Caco-2 (cell line): ENCODE measurements at regions of chr6 and their contacts with region 1.

Region 1: GRCh38 chr6:102986086-102986485 is 1592.6 kb downstream of the GRIK2 start:
- DNase-seq: no peak
- H3K4me3 ChIP-seq: no peak overlapping the region
- H3K4me3 Mint-ChIP-seq: no peak overlapping the region
- H3K27ac Mint-ChIP-seq: peak overlapping the region; percentile 26
- H3K4me1 ChIP-seq: peaks cover 21% of the 10 kb centered on the region
- H3K4me1 Mint-ChIP-seq: peaks cover 19% of the 10 kb centered on the region
- H3K27me3 ChIP-seq: no peaks in the 10 kb centered on the region
- H3K27me3 Mint-ChIP-seq: no peaks in the 10 kb centered on the region
- CTCF ChIP-seq: no peak

Region 2: DNA sequence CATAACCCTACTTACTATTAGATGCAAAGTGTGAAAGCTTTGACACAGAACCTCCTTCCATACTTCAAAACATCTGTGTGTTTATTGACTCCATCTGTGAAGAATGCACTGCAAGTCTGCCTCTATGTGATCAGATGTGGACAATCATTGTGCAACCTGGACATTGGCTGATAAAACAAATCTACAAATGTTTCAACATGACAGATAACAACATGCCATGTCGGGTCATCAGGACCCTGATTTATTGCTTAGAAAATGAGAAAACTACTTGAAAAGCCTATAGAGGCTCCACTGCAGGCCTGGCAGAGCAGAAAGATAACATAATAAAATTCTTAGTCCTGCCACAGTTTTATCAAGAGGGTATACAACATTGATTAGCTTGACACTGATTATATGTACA is 306.2 kb before region 1 on chr6:
- CTCF ChIA-PET with region 1: no interaction called
- POLR2A ChIA-PET with region 1: no interaction called
- intact Hi-C with region 1: loop called (anchors 1 kb)
- DNase-seq: peak; percentile 51 to 53
- H3K4me3 ChIP-seq: no peak overlapping the region
- H3K4me3 Mint-ChIP-seq: peak overlapping the region; percentile 18
- H3K27ac Mint-ChIP-seq: no peak overlapping the region
- H3K4me1 ChIP-seq: peaks cover 19% of the 10 kb centered on the region
- H3K4me1 Mint-ChIP-seq: peaks cover 13% of the 10 kb centered on the region
- H3K27me3 ChIP-seq: no peaks in the 10 kb centered on the region
- H3K27me3 Mint-ChIP-seq: no peaks in the 10 kb centered on the region
- CTCF ChIP-seq: no peak

Region 3: DNA sequence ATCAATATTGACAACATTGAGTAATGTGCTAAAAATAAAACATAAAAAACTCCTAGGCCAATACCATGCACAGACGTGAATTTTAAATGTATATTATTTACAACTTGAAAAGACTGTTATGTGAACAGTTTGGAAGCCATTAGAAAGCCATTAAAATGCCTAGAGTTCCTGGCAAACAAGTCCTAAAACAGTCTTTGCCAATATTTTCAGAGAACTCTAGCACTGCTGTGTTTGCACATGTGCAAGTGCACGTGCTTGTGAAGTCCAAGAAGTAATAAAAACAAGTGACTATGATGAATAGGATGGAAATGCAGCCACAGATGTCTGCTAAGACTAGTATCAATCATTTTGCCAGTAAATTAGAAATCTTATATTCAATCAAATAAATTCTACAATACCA is 145.0 kb before region 1 on chr6:
- CTCF ChIA-PET with region 1: no interaction called
- POLR2A ChIA-PET with region 1: no interaction called
- intact Hi-C with region 1: no loop called
- DNase-seq: peak; percentile 4 to 34
- H3K4me3 ChIP-seq: no peak overlapping the region
- H3K4me3 Mint-ChIP-seq: no peak overlapping the region
- H3K27ac Mint-ChIP-seq: no peak overlapping the region
- H3K4me1 ChIP-seq: no peaks in the 10 kb centered on the region
- H3K4me1 Mint-ChIP-seq: no peaks in the 10 kb centered on the region
- H3K27me3 ChIP-seq: no peaks in the 10 kb centered on the region
- H3K27me3 Mint-ChIP-seq: no peaks in the 10 kb centered on the region
- CTCF ChIP-seq: no peak

Region 4: GRCh38 chr6:102853269-102853955 is 132.7 kb before region 1 on chr6:
- CTCF ChIA-PET with region 1: no interaction called
- POLR2A ChIA-PET with region 1: no interaction called
- intact Hi-C with region 1: loop called (anchors 1 kb)
- DNase-seq: peak; percentile 50 to 57
- H3K4me3 ChIP-seq: no peak overlapping the region
- H3K4me3 Mint-ChIP-seq: no peak overlapping the region
- H3K27ac Mint-ChIP-seq: no peak overlapping the region
- H3K4me1 ChIP-seq: peaks cover 7% of the 10 kb centered on the region
- H3K4me1 Mint-ChIP-seq: peaks cover 13% of the 10 kb centered on the region
- H3K27me3 ChIP-seq: no peaks in the 10 kb centered on the region
- H3K27me3 Mint-ChIP-seq: no peaks in the 10 kb centered on the region
- CTCF ChIP-seq: no peak

Region 5: DNA sequence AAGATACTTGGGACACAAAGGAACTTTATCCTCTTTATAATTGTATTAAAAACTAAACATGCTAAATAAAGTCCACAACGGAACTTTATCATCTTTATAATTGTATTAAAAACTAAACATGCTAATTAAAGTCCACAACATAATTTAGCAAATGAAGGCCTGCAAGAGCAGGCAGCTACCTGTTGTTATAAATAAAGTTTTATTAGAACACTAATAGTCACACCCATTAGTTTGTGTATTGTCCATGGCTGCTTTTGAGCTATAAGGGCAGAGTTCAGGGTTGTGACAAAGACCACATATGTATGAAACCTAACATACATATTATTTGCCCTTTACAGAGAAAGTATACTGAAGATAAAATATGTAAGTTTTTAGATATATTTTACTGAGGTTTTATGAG is 109.4 kb after region 1 on chr6:
- CTCF ChIA-PET with region 1: no interaction called
- POLR2A ChIA-PET with region 1: no interaction called
- intact Hi-C with region 1: loop called (anchors 1 kb)
- DNase-seq: no peak
- H3K4me3 ChIP-seq: no peak overlapping the region
- H3K4me3 Mint-ChIP-seq: no peak overlapping the region
- H3K27ac Mint-ChIP-seq: no peak overlapping the region
- H3K4me1 ChIP-seq: no peaks in the 10 kb centered on the region
- H3K4me1 Mint-ChIP-seq: no peaks in the 10 kb centered on the region
- H3K27me3 ChIP-seq: no peaks in the 10 kb centered on the region
- H3K27me3 Mint-ChIP-seq: no peaks in the 10 kb centered on the region
- CTCF ChIP-seq: no peak

Region 6: DNA sequence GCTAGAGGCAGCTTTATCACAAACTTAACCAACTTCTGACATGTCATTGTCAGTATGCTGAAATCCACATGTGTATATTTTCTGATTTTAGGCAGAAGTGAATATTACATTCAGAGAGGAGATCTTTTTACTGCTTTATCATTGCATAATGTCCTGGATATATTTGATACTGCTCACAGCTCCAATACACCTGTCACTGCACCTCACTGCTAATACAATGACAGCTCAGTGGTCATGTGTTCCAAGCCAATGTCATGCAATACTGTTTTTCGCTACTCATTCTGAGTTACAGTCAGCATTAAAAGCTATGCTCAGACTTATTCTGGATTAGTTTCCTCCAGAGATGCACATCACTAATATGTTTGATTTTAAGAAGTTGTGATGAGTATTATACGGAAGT is 269.0 kb after region 1 on chr6:
- CTCF ChIA-PET with region 1: no interaction called
- POLR2A ChIA-PET with region 1: no interaction called
- intact Hi-C with region 1: no loop called
- DNase-seq: no peak
- H3K4me3 ChIP-seq: no peak overlapping the region
- H3K4me3 Mint-ChIP-seq: no peak overlapping the region
- H3K27ac Mint-ChIP-seq: no peak overlapping the region
- H3K4me1 ChIP-seq: no peaks in the 10 kb centered on the region
- H3K4me1 Mint-ChIP-seq: no peaks in the 10 kb centered on the region
- H3K27me3 ChIP-seq: no peaks in the 10 kb centered on the region
- H3K27me3 Mint-ChIP-seq: no peaks in the 10 kb centered on the region
- CTCF ChIP-seq: no peak

Region 7: DNA sequence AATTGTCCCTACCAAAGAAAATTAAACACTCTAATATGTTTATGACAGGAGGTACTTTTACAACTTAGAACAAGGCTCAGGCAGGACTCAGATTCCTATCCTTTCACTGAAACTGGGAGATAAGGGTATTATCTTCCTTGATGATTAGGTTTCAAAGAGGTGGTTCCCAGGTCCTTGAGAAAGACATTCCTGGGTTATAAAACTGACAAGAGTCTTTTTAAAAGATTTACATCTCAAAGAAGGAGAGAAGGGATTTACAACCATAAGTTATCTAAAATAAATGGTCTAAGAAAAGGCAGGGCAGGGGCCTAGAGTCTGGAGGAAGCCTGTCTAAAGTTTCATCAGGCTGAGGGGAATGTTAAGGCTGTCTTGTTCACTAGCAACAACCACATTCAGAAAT is 381.1 kb after region 1 on chr6:
- CTCF ChIA-PET with region 1: no interaction called
- POLR2A ChIA-PET with region 1: no interaction called
- intact Hi-C with region 1: loop called (anchors 1 kb)
- DNase-seq: peak; percentile 51 to 70
- H3K4me3 ChIP-seq: no peak overlapping the region
- H3K4me3 Mint-ChIP-seq: peak overlapping the region; percentile 35
- H3K27ac Mint-ChIP-seq: peak overlapping the region; percentile 79
- H3K4me1 ChIP-seq: peaks cover 18% of the 10 kb centered on the region
- H3K4me1 Mint-ChIP-seq: peaks cover 25% of the 10 kb centered on the region
- H3K27me3 ChIP-seq: no peaks in the 10 kb centered on the region
- H3K27me3 Mint-ChIP-seq: no peaks in the 10 kb centered on the region
- CTCF ChIP-seq: no peak